Activated naive CD4-positive, alpha-beta T cell treated with anti-CD3 and anti-CD28 coated beads for 36 hours (primary cell): ENCODE measurements at regions of chr4 and their contacts with region 1.

Region 1: GRCh38 chr4:70629469-70630090 is 1.0 kb downstream of the ENAM start:
- DNase-seq: no peak
- H3K4me3 Mint-ChIP-seq: no peak overlapping the region
- H3K27ac Mint-ChIP-seq: no peak overlapping the region
- H3K4me1 Mint-ChIP-seq: peaks cover 8% of the 10 kb centered on the region
- H3K27me3 Mint-ChIP-seq: peaks cover 7% of the 10 kb centered on the region

Region 2: DNA sequence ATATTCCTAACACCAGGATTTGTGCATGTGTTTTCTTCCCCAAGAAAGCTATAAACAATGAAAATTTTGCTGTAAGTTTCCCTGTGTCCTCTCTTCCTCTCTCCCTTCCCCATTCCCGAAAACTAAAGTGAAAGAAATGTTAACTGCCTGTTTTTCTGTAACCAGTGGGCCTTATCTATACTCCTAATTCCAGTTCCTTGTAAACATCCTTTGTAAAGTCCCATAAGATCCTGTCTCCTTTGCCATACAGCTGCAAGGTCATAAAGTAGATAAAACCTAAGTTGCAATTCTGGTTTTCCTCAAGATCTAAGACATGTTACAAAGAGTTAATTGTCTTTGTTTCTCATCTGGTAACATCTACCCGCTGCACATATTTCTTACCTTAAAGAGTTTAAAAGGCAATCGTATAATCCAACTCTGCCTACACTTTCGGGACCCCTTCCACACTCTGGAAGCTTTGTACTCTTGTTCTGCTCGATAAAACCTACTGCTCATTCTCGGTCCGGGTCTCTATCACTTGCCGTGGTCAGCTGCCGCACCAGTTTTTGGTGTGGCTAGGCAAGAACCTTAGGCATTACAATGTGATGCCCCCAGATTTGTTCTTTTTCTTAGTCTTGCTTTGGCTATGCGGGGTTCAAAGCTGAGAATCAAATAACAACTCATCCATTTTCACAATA is 1512.8 kb before region 1 on chr4:
- CTCF ChIA-PET with region 1: no interaction called
- intact Hi-C with region 1: no loop called
- DNase-seq: no peak
- H3K4me3 Mint-ChIP-seq: no peak overlapping the region
- H3K27ac Mint-ChIP-seq: no peak overlapping the region
- H3K4me1 Mint-ChIP-seq: no peaks in the 10 kb centered on the region
- H3K27me3 Mint-ChIP-seq: no peaks in the 10 kb centered on the region

Region 3: DNA sequence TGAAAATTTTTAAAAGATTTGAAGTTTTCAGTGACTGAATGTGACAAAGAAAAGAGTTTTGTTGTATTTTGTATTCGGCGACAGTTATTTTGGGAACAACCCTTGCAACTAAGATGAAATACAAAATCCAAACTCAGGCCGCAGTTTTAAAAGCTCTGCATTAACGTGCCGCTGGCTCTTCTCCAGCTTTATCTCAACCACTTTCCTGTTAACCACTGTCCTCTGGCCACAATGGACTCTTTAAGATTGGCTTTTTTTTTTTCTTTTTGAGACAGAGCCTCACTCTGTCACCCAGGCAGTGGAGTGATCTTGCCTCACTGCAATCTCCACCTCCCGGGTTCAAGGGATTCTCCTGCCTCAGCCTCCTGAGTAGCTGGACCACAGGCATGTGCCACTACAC is 133.3 kb before region 1 on chr4:
- CTCF ChIA-PET with region 1: no interaction called
- intact Hi-C with region 1: no loop called
- DNase-seq: no peak
- H3K4me3 Mint-ChIP-seq: no peak overlapping the region
- H3K27ac Mint-ChIP-seq: no peak overlapping the region
- H3K4me1 Mint-ChIP-seq: no peaks in the 10 kb centered on the region
- H3K27me3 Mint-ChIP-seq: no peaks in the 10 kb centered on the region

Region 4: DNA sequence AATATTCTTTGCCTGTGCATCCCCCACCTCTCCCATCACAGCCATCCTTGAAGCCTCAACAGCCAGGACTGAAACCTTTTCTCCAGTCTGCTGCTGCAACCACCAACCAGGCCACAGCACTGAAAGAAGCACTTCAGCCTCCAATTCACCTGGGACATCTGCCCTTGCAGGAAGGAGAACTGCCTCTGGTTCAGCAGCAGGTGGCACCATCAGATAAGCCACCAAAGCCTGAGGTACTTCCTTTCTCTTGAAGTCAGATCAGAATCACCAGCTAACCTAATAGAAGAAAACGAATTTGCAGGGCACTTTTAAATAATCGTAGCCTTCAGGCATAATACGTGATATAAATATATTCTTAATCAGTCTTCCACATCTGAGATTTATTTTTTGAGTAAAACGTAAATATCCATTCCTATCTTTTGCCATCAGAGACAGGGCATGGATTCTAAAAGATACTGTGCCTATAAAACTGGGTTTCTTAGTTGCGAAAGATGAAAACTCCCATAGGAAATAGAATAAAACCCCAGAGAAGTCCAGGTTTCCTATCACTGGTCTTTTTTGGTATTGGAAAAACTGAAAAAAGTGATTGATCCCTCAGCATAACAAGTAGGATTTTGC is 28.0 kb before region 1 on chr4:
- CTCF ChIA-PET with region 1: no interaction called
- intact Hi-C with region 1: no loop called
- DNase-seq: peak; percentile 81
- H3K4me3 Mint-ChIP-seq: no peak overlapping the region
- H3K27ac Mint-ChIP-seq: no peak overlapping the region
- H3K4me1 Mint-ChIP-seq: no peaks in the 10 kb centered on the region
- H3K27me3 Mint-ChIP-seq: no peaks in the 10 kb centered on the region

Region 5: GRCh38 chr4:70640192-70640591 is 10.6 kb after region 1 on chr4:
- CTCF ChIA-PET with region 1: interaction called, 3 read pairs
- intact Hi-C with region 1: loop called (anchors 1 kb)
- DNase-seq: no peak
- H3K4me3 Mint-ChIP-seq: no peak overlapping the region
- H3K27ac Mint-ChIP-seq: no peak overlapping the region
- H3K4me1 Mint-ChIP-seq: peaks cover 10% of the 10 kb centered on the region
- H3K27me3 Mint-ChIP-seq: no peaks in the 10 kb centered on the region

Region 6: GRCh38 chr4:71009890-71010588 is 380.5 kb after region 1 on chr4:
- CTCF ChIA-PET with region 1: no interaction called
- intact Hi-C with region 1: loop called (anchors 10 kb)
- DNase-seq: no peak
- H3K4me3 Mint-ChIP-seq: no peak overlapping the region
- H3K27ac Mint-ChIP-seq: no peak overlapping the region
- H3K4me1 Mint-ChIP-seq: peaks cover 34% of the 10 kb centered on the region
- H3K27me3 Mint-ChIP-seq: no peaks in the 10 kb centered on the region